GM12878 (cell line): ENCODE measurements at regions of chrX and their contacts with region 1.

Region 1: GRCh38 chrX:114252186-114252585 is 331.7 kb upstream of the HTR2C start:
- DNase-seq: no peak
- ATAC-seq: no peak
- H3K4me3 ChIP-seq: no peak overlapping the region
- H3K27ac ChIP-seq: no peak overlapping the region
- H3K4me1 ChIP-seq: no peaks in the 10 kb centered on the region
- H3K27me3 ChIP-seq: no peaks in the 10 kb centered on the region
- CTCF ChIP-seq: no peak
- EP300 ChIP-seq: no peak
- POLR2A ChIP-seq: no peak
- RAD21 ChIP-seq: no peak

Region 2: GRCh38 chrX:114675365-114675764 is 423.2 kb after region 1 on chrX:
- CTCF ChIA-PET with region 1: no interaction called
- POLR2A ChIA-PET with region 1: no interaction called
- RAD21 ChIA-PET with region 1: no interaction called
- SMC1A ChIA-PET with region 1: no interaction called
- in situ Hi-C with region 1: no loop called
- intact Hi-C with region 1: loop called (anchors 5 kb)
- DNase-seq: no peak
- ATAC-seq: no peak
- H3K4me3 ChIP-seq: no peak overlapping the region
- H3K27ac ChIP-seq: no peak overlapping the region
- H3K4me1 ChIP-seq: no peaks in the 10 kb centered on the region
- H3K27me3 ChIP-seq: no peaks in the 10 kb centered on the region
- CTCF ChIP-seq: no peak
- EP300 ChIP-seq: no peak
- POLR2A ChIP-seq: no peak
- RAD21 ChIP-seq: no peak